Endothelial cell of umbilical vein (primary cell): ENCODE measurements at regions of chr4 and their contacts with region 1.

Region 1: DNA sequence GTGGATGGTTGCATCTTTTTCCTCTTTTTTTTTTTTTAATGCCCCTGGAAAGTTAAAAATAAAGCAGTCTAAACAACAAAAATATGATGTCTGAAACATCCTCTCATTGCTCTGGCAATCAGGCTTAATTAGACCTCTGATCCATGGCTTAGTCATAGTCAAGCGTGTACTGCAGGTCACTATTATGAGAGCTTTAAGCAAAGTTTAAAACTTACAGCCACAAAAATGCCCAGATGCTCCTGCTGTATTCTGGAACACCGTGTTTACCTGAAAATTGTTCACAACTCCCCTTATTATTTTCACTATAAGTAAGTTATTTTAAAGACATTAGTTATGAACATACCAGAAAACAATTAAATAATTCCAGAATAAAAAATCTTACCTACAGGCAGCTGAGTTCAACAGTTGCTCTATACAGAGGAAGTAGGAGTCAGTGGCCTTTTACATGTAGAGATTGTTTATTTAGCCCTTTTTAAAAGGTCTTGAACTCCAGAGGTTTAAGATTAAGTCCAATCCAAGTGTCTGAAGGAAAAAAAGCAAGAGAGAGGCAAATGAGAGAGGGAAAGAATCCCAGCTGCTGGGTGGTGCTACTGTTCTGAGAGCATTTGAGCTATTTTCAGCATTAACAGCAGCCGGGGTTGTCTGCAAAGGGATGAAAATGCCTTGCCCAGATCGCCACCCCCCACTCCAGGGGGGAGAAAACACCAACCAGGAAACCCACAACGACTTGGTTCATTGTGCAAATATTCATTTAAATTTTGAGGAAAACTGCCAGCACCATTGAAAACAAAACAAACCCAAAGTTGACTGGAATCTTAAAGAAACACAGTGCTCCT is 36.9 kb downstream of the SORBS2 start:
- DNase-seq: peak; percentile 92
- H3K4me3 ChIP-seq: peak overlapping the region; percentile 50 to 88 (median 62)
- H3K27ac ChIP-seq: peak overlapping the region; percentile 91
- H3K4me1 ChIP-seq: peaks cover 46% of the 10 kb centered on the region
- H3K27me3 ChIP-seq: no peaks in the 10 kb centered on the region
- CTCF ChIP-seq: no peak
- POLR2A ChIP-seq: peak; percentile 69

Region 2: GRCh38 chr4:185640811-185641675 is 134.0 kb before region 1 on chr4:
- CTCF ChIA-PET with region 1: interaction called, 18 read pairs
- POLR2A ChIA-PET with region 1: no interaction called
- dilution Hi-C with region 1: no loop called
- intact Hi-C with region 1: loop called (anchors 2 kb)
- DNase-seq: peak; percentile 69
- H3K4me3 ChIP-seq: no peak overlapping the region
- H3K27ac ChIP-seq: no peak overlapping the region
- H3K4me1 ChIP-seq: no peaks in the 10 kb centered on the region
- H3K27me3 ChIP-seq: no peaks in the 10 kb centered on the region
- CTCF ChIP-seq: peak in 1 of 2 donors; percentile 33
- POLR2A ChIP-seq: no peak

Region 3: DNA sequence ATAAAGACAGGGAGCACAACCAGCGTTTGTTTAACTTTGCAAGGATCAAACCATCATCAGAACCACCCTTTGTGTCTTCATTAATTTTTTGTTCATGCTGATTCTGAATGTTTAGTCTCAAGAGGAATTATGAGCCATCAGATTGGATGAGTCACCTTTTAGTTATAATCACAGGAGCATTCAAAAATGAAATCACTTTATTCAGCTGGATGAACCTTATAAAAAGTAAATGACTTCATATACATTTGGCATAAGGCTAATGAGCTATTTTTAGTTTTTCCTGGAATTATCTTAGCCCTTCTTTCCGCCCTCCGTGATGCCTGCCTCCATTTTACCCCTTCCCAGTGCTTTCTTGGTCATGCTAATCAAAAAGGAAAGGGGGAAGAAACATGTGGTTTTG is 66.7 kb before region 1 on chr4:
- CTCF ChIA-PET with region 1: interaction called, 4 read pairs
- POLR2A ChIA-PET with region 1: no interaction called
- dilution Hi-C with region 1: no loop called
- intact Hi-C with region 1: loop called (anchors 2 kb)
- DNase-seq: peak; percentile 82
- H3K4me3 ChIP-seq: no peak overlapping the region
- H3K27ac ChIP-seq: peak overlapping the region; percentile 83
- H3K4me1 ChIP-seq: peaks cover 50% of the 10 kb centered on the region
- H3K27me3 ChIP-seq: no peaks in the 10 kb centered on the region
- CTCF ChIP-seq: no peak
- POLR2A ChIP-seq: no peak

Region 4: DNA sequence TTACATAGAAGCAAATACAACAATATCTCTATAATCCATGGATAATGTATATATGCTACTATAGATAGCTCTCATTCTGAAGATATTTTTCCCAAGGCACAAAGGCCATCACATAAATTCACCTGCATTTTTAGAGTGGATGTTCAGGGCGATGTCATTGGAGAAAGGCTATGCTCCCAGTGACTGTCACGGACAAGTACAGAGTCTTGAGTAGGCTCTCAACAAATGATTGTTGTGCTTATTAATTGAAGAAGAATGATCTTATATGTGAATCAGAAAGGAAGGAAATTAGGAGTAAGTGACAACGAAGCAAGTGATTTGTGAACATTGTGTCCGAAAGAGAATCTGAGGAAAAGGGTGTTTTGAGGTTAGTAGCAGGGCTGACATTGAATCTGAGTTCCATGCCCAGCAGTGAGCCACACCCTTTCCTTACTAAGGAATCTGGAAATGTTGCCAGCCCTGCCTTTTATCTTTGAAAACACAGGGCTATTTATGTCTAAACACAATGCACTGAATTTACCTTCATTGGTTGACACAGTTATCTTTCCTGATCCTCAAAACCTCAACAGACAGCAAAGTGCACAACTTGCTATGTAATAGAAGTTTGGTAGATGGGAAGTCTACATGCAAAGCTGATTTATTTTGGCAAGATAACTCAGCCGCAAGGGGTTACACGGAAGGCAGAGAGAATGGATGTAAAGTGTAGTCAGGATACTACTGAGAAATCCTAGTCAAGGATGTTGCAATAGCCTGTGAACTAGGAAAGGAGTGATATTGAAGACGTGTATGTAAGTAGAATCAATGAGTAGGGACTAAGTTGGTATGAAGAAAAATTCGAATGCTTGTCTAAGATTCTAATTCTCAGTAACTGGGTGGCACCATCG is 13.5 kb before region 1 on chr4:
- CTCF ChIA-PET with region 1: interaction called, 6 read pairs
- POLR2A ChIA-PET with region 1: interaction called, 3 read pairs
- dilution Hi-C with region 1: no loop called
- intact Hi-C with region 1: loop called (anchors 1 kb)
- DNase-seq: peak; percentile 73
- H3K4me3 ChIP-seq: peak overlapping the region in 1 of 3 experiments; percentile 2
- H3K27ac ChIP-seq: peak overlapping the region; percentile 51
- H3K4me1 ChIP-seq: peaks cover 44% of the 10 kb centered on the region
- H3K27me3 ChIP-seq: no peaks in the 10 kb centered on the region
- CTCF ChIP-seq: no peak
- POLR2A ChIP-seq: no peak

Region 5: GRCh38 chr4:185839194-185839712 is 64.2 kb after region 1 on chr4:
- CTCF ChIA-PET with region 1: interaction called, 6 read pairs
- POLR2A ChIA-PET with region 1: no interaction called
- dilution Hi-C with region 1: no loop called
- intact Hi-C with region 1: loop called (anchors 1 kb)
- DNase-seq: peak; percentile 95
- H3K4me3 ChIP-seq: no peak overlapping the region
- H3K27ac ChIP-seq: peak overlapping the region; percentile 77
- H3K4me1 ChIP-seq: peaks cover 36% of the 10 kb centered on the region
- H3K27me3 ChIP-seq: no peaks in the 10 kb centered on the region
- CTCF ChIP-seq: no peak
- POLR2A ChIP-seq: no peak

Region 6: GRCh38 chr4:185955812-185956543 is 180.9 kb after region 1 on chr4:
- CTCF ChIA-PET with region 1: no interaction called
- POLR2A ChIA-PET with region 1: no interaction called
- dilution Hi-C with region 1: no loop called
- intact Hi-C with region 1: no loop called
- DNase-seq: no peak
- H3K4me3 ChIP-seq: no peak overlapping the region
- H3K27ac ChIP-seq: no peak overlapping the region
- H3K4me1 ChIP-seq: no peaks in the 10 kb centered on the region
- H3K27me3 ChIP-seq: peaks cover 0 to 4% of the 10 kb centered on the region in 2 experiments
- CTCF ChIP-seq: no peak
- POLR2A ChIP-seq: no peak

Region 7: GRCh38 chr4:186021461-186022167 is 246.6 kb after region 1 on chr4:
- CTCF ChIA-PET with region 1: interaction called, 67 read pairs
- POLR2A ChIA-PET with region 1: no interaction called
- dilution Hi-C with region 1: no loop called
- intact Hi-C with region 1: loop called (anchors 1 kb)
- DNase-seq: peak; percentile 69
- H3K4me3 ChIP-seq: no peak overlapping the region
- H3K27ac ChIP-seq: no peak overlapping the region
- H3K4me1 ChIP-seq: no peaks in the 10 kb centered on the region
- H3K27me3 ChIP-seq: no peaks in the 10 kb centered on the region
- CTCF ChIP-seq: peak; percentile 73 to 82
- POLR2A ChIP-seq: no peak